AG04449 (cell line): ENCODE measurements at regions of chr6 and their contacts with region 1.

Region 1: DNA sequence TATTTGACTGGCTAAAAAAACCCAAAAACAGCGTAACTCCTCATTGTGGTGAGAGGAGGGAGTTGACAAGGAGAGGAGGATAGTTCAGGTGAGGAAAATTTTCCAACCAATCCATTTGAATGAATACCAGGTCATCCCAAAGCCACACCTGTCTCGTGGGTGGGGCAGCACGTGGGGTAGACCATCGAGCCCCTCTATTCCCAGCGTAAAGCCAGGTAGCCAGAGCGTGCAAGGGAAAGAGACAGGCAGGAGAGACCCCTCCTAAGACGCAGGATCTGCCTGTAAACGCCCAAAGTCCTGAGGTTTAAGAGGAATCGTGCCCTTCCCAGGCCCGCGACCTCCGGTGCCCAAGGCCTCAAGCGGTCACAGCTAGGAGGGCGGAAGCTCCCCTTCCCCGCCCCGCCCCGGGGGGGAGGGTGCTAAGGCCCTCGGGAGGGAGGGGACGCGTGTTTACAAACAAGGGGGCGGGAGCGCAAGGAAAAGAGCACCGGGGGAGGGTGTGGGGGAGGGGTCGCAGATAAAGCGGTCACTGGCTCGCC is 716 bp downstream of the RXRB start:
- DNase-seq: no peak
- H3K4me3 ChIP-seq: peak overlapping the region; percentile 72
- CTCF ChIP-seq: no peak

Region 2: DNA sequence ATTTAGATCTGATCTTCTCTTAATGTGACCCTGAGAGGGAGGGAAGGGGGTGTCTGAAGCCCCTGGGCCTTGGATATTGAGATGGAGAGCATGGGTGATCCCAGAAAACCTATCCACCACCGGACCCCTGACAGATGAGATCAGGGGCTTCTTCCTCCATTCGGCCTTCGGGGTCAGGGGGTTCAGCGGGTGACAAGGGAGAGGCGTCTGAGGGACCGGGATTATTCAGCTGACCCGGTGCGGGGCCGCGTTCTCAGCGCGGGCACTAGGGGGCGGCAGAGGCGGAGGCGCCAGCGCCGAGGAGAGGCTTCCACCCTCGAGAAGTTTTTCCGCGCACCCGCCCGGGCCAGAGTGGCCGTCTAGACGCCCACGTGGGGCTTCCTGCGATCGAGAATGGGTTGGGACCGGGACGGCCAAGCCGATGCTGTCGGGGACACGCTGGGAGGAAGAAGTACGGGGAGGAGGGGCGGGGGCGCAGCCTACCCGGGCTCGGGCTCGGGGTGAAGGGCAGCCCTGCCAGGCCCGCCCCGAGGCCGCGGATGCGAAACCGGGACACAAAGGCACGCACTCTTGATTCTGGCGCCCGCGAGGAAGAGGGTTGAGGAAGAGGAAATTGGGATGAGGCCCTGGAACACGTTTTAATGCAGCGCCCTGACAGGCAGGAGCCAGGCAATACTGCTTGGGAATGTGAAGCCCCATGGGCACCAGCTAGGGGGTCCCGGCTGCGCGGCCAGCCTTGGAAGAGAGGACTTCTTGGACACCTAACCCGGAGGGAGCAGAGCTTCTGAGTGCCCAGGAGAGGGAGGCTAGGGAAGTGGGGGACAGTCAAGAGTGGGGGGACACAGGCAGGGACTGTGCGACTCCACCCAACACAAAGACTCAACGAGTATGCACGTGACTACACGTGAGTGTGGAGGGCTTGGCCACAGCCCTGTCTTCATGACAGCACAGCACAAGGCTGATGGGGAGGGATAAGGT is 38.1 kb before region 1 on chr6:
- CTCF ChIA-PET with region 1: interaction called, 17 read pairs
- POLR2A ChIA-PET with region 1: no interaction called
- DNase-seq: no peak
- H3K4me3 ChIP-seq: peak overlapping the region; percentile 57
- CTCF ChIP-seq: peak; percentile 94

Region 3: DNA sequence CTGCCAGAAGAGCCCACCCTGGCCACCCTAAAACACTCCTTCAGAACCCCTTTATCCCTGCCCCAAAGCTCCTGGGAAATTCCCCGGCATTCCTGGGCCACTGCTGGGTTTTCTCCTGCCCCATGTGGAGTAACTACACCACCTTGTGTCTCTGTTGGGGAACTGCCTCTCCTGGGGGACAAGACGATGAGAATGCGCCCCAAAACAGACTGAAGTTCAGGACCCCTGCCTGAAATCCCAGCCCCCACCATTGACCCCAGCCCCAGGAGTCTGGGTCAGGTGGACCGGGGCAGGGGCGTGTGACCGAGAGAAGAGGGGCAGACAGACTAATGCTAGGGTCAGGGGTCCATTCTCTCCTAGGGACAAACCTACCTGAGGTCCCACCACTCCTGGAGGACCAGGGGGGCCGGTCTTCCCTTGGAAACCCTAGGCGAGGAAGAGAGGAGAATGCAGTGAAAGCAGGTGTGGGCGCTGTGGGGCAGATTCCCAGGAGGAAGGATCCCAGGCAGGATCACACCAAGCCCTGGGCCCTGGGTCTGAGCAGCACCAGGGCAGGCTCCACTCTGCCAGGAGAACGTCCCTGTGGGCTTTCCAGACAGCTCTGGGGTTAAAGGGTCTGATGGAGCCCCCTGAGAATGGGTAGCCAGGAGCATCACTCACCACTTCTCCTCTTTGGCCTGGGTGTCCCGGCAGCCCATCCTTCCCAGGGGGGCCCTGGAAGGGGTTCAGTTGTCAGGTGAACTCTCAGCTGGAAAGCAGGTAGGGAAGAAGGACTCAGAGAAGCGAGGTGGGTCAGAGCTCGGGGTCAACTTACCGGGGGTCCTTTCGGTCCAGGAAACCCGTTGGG is 26.8 kb before region 1 on chr6:
- CTCF ChIA-PET with region 1: interaction called, 22 read pairs
- POLR2A ChIA-PET with region 1: no interaction called
- DNase-seq: no peak
- H3K4me3 ChIP-seq: no peak overlapping the region
- CTCF ChIP-seq: peak; percentile 67

Region 4: GRCh38 chr6:33344701-33345697 is 145.2 kb after region 1 on chr6:
- CTCF ChIA-PET with region 1: no interaction called
- POLR2A ChIA-PET with region 1: no interaction called
- DNase-seq: peak; percentile 29
- H3K4me3 ChIP-seq: no peak overlapping the region
- CTCF ChIP-seq: peak; percentile 38